Cardiac septum (tissue), 1 donor: ENCODE measurements at regions of chr12 and their contacts with region 1.

Region 1: DNA sequence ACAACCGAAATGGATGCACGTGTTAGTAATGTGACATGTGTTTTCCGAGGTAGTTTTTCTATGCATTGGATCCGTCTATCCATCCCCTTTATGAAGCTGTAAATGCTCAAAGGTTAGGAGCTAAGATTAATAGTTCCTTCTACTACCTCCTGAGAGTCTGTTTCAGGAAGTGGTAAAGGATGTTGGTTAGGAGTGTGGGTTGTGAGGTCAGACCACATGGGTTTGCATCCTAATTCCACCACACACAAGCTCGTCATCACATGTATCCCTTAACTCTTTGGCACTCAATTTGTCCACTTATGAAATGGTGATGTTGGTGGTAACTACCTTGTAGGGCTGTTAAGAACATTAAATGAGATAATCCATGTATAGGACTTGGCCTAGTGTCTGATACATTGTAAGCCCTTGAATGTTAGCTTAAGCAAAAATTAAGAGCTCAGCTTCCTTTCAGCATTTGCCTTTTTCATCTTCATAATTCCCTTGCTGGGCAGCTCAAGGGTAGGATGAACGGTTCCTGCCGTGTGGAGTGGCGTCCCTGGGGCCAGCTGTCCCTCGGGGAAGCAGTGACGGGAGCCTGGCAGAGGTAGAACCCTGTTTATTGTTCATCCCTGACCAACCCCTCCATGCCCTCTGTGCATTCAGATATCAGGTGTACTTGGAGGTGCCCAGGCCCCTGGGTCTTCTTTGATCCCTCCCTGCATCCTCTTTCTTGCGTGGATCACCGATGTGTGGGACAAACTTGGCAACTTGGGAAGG is 52.3 kb downstream of the TSPAN9 start:
- DNase-seq: no peak

Region 2: GRCh38 chr12:3073438-3074250 is 55.8 kb before region 1 on chr12:
- intact Hi-C with region 1: loop called (anchors 2 kb)
- DNase-seq: peak; percentile 89

Region 3: DNA sequence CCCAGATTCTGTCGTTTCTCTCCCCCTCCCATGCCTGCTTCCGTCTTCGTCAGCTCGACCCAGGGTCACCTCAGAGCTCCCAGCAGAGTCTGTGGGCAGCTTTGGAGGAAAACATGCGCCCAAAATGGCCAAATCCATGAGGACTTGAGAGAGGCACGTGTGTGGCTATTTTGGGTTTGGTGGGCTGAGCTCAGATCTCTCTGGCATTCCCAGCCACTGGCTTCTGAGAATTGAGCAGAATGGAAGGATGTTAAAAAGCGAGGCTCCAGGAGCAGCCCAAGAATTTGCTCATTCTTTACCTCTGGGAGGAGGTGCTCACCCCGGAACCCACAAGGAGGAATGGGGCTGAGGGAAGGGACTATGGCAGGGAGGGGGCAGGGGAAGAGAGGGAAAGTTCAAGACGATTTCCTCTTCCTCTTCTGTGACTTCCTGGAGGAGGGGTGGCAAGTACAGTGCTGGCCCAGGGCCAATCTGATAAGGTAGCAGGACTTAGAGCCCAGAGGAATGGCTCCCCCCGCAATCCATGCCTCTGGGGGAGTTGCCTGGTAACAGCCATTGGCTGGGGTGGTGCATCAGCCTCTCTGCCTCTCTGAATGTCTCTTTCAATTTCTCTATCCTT is 32.2 kb before region 1 on chr12:
- intact Hi-C with region 1: no loop called
- DNase-seq: peak; percentile 83

Region 4: DNA sequence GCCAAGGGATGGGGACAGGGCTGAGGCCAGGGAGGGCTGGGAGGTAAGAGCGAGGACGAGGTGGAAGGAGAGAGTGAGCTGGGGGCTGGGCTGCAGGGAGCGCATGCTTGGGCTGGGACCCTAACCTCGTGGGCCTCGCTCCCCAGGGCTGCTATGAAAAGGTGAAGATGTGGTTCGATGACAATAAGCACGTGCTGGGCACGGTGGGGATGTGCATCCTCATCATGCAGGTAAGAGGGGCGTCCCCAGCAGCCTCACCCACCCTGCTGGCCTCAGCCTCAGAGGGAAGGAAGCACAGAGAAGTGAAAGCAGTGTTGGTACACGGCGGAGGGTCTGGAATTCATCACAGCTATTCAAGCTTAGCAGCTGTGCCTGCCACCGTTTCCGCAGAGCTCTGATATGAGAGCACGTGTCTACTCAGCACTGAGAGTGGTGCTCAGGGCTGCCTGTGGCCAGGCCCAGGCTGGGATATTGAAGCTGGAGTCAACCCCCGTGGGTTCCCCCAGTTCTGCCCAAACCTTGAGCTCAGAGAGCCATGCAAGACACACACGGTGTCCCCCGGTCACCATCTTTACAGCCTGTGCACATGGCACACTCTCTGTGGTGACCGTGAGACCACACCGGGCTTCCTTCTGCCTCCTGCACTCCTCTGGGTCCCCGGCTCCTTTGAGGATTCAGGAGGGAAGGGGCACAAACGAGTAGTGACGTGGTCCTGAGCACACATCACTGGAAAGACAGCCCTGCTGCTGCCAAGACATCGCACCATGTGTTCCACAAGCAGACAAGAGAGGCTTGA is 152.3 kb after region 1 on chr12:
- intact Hi-C with region 1: no loop called
- DNase-seq: no peak